Colonic mucosa (tissue), 4 donors: ENCODE measurements at regions of chr2 and their contacts with region 1.

Region 1: GRCh38 chr2:80238692-80239469 is 65.7 kb downstream of the LRRTM1 start:
- DNase-seq: peak; percentile 63
- H3K4me3 ChIP-seq: no peak overlapping the region
- H3K27ac ChIP-seq: no peak overlapping the region
- H3K4me1 ChIP-seq: no peaks in the 10 kb centered on the region
- H3K27me3 ChIP-seq: no peaks in the 10 kb centered on the region
- CTCF ChIP-seq: peak; percentile 82

Region 2: DNA sequence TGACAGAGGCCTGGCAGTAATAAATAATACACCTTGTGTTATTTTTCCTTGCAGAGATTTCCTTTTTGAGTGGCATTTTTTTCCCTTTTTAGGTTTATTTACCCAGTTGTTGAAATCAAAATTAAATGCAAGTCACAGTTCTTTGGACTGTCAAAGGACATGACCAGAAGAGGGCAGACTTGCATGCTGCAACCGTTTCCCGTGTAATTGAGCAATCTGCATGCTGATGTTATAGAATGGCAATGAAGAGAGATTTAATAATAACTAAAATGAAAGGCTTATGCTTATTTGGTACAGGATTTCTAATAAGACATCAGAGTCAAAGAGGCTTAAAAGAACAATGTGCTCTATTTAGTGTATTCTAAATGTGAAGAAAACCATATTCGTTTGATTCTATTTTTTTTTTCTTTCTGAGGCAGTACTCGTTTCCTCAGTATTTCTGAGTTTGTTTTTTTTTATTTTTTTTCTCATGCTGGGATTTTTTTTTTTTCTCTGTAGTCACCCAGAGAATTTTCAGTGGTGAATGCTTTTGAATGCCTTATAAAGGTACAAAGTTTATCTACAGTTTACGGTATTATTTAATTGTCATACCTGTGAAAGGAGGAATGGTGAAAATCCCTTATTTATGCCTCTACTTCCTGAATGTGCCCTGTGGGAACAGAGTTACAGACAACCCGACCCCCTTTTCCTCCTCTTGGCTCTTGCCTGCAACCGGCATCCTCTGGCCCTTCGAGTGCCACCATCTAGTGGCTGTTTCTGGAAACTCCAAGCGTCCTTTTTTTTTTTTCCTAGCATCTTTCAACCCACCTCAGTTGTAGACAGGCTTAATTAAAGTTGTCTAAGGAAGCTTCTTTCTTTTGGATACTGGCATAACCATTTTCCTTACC is 302.9 kb before region 1 on chr2:
- intact Hi-C with region 1: loop called (anchors 10 kb)
- DNase-seq: peak; percentile 63
- H3K4me3 ChIP-seq: no peak overlapping the region
- H3K27ac ChIP-seq: no peak overlapping the region
- H3K4me1 ChIP-seq: no peaks in the 10 kb centered on the region
- H3K27me3 ChIP-seq: no peaks in the 10 kb centered on the region
- CTCF ChIP-seq: peak; percentile 59

Region 3: GRCh38 chr2:80073134-80073561 is 165.7 kb before region 1 on chr2:
- intact Hi-C with region 1: loop called (anchors 2 kb)
- DNase-seq: peak; percentile 34
- H3K4me3 ChIP-seq: no peak overlapping the region
- H3K27ac ChIP-seq: no peak overlapping the region
- H3K4me1 ChIP-seq: no peaks in the 10 kb centered on the region
- H3K27me3 ChIP-seq: no peaks in the 10 kb centered on the region
- CTCF ChIP-seq: peak; percentile 45

Region 4: DNA sequence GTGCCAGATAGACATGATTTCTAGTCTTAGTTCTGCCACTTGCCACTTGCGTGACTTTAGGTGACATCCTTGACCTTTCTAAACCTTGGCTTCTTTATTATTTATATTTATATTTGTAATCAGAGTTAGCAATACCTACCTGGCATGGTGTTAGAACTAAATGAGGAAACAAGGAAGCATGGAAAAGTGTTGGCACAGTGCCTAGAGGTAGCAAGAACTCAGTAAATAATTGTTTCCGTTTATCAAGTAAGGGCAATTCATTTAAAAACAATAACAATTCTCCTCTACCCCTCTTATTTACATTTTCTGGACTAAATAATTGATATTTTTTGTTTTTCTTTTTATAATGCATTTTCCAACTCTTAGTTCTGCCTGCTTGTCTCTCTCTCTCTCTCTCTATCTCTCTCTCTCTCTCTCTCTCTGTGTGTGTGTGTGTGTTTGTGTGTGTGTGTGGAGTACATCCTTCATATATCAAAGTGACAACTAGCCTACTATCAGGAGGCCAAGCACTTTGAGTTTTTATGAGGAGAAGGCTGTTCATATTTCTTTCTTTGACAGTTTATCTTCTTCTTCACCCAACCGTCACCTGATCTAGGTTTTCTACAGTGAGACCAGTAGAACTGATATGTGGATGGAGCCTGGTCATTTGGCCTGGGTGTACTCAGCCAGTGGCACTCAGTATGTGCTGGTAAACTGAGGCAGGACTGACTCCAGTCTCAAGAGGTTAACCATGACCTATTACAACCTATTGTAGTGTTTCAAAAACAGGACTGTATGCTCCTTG is 68.9 kb before region 1 on chr2:
- intact Hi-C with region 1: no loop called
- DNase-seq: no peak
- H3K4me3 ChIP-seq: no peak overlapping the region
- H3K27ac ChIP-seq: no peak overlapping the region
- H3K4me1 ChIP-seq: no peaks in the 10 kb centered on the region
- H3K27me3 ChIP-seq: no peaks in the 10 kb centered on the region
- CTCF ChIP-seq: no peak